Motor neuron (in vitro differentiated cells): ENCODE measurements at regions of chr11 and their contacts with region 1.

Region 1: GRCh38 chr11:95556342-95557163 is 233.0 kb downstream of the FAM76B start:
- ATAC-seq: peak in 6 of 8 experiments; percentile 21 to 94 (median 66)
- H3K4me3 ChIP-seq: no peak overlapping the region
- H3K27ac ChIP-seq: no peak overlapping the region
- H3K4me1 ChIP-seq: peaks cover 4 to 12% of the 10 kb centered on the region in 2 donors

Region 2: DNA sequence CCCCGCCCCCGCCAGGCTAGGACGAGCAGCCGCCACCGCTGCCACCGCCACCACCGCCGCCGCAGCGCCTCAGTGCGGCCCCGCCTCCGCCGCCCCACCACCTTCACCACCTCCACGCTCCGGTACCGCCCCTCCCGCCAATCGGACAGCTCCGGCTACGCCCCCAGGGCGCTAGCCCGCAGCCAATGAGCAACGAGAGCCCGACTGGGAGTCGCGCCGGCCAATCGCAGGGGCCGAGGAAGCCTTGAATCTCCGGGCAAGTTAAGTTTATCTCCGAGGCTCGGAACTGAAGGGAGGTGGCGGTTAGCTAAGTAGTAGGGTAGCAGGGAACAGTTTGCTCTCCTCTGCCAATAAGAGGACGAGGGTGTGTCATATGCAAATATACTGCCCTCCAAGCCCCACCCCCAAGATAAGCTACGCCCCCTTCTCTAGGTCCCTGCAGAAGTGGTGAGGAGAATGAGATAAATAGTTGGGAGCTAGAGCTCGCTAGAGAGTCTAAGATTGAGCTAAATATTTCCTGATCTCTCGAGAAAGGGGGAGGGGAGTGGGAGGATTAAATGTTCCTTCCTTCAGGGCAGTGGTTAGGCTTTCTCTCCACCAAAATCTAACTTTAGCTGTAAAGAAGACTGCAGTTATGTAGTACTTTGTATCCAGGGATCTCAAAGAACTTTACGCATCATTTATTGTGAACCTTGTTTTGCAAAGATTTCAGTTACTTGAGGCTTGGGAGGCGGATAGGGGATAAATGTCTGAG is 325.2 kb before region 1 on chr11 and contains the start of gene SESN3:
- in situ Hi-C with region 1: loop called in 1 of 9 experiments (anchors 25 kb)
- ATAC-seq: peak; percentile 88 to 93 (median 91)
- H3K4me3 ChIP-seq: peak within 1 kb of the TSS; percentile 56 to 88 (median 69)
- H3K27ac ChIP-seq: peak within 1 kb of the TSS; percentile 85 to 86
- H3K4me1 ChIP-seq: peaks cover 7 to 8% of the 10 kb centered on the region in 2 donors
- total RNA-seq, gene SESN3: 21.6 to 305 (median 82.1) TPM

Region 3: DNA sequence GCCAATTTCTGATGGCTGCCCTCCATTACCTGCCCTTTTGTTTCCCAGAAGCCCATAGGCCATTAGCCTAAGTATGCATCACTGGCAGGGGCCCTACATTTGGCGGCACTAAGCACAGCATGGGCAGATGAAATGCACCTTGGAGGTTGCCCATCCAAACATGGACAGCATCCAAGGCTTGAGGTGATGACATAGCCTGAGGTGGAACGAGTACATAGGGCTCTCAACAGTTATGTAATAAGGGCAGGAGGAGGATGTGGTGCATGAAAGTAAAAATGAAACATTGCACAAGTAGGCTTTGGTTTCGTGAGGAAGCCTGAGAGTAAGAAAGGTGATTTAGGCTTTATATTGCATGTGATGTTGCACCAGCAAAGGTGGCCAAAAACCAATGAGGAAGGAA is 84.9 kb after region 1 on chr11:
- in situ Hi-C with region 1: no loop called
- ATAC-seq: no peak
- H3K4me3 ChIP-seq: no peak overlapping the region
- H3K27ac ChIP-seq: no peak overlapping the region
- H3K4me1 ChIP-seq: no peaks in the 10 kb centered on the region

Region 4: GRCh38 chr11:95680169-95680929 is 123.8 kb after region 1 on chr11:
- in situ Hi-C with region 1: loop called in 1 of 9 experiments (anchors 25 kb)
- ATAC-seq: peak; percentile 38 to 93 (median 76)
- H3K4me3 ChIP-seq: no peak overlapping the region
- H3K27ac ChIP-seq: no peak overlapping the region
- H3K4me1 ChIP-seq: peaks cover 7 to 10% of the 10 kb centered on the region in 2 donors

Region 5: DNA sequence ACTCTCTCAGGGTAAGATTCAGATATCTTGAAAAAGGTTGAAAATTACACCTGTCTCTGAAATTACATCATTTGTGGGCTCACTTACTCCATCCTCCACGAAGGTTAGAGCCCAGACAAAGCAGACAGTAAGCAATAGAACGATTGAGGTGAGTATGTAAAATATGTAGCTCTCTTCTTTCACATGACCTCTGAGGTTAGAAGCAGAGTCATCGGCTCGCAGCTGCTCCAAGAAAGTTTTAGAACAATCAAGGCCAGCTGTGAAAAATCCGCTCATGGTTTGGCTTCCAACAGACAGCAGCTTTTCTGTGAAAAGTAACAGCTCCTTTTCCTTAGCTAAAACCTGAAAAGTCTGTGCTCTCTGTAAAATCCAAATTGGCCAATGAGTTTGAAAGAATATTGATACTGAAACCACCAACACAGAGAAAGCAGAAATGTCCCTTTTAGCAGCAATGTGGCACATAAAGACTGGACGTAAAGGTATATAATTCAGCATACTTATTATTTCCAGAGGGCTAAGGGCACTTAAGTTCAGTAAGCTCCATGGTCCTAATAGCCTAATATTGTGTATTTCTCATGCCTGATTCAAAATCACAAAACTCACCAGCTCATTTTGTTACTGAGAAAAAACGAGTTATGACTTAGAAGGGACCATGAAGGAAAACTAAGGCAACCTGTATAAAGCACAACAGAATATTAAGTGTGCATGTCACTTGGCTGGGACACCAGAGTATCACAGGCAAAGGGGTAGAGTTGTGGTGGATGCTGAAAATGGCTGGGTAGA is 154.8 kb after region 1 on chr11:
- in situ Hi-C with region 1: no loop called
- ATAC-seq: peak in 1 of 8 experiments; percentile 24
- H3K4me3 ChIP-seq: no peak overlapping the region
- H3K27ac ChIP-seq: no peak overlapping the region
- H3K4me1 ChIP-seq: peaks cover 4 to 5% of the 10 kb centered on the region in 2 donors